K562 (cell line): ENCODE measurements at regions of chr1 and their contacts with region 1.

Region 1: GRCh38 chr1:204128964-204129896 is 22.6 kb downstream of the ETNK2 start:
- DNase-seq: peak; percentile 73 to 96 (median 94)
- ATAC-seq: peak; percentile 97
- H3K4me3 ChIP-seq: no peak overlapping the region
- H3K27ac ChIP-seq: no peak overlapping the region
- H3K4me1 ChIP-seq: peaks cover 0 to 15% of the 10 kb centered on the region in 2 experiments; a peak in 2 of 5 replicates
- H3K27me3 ChIP-seq: peaks cover 16 to 38% of the 10 kb centered on the region in 2 experiments
- CTCF ChIP-seq: peak; percentile 78 to 92 (median 88)
- EP300 ChIP-seq: no peak
- POLR2A ChIP-seq: no peak
- RAD21 ChIP-seq: peak; percentile 88 to 90

Region 2: DNA sequence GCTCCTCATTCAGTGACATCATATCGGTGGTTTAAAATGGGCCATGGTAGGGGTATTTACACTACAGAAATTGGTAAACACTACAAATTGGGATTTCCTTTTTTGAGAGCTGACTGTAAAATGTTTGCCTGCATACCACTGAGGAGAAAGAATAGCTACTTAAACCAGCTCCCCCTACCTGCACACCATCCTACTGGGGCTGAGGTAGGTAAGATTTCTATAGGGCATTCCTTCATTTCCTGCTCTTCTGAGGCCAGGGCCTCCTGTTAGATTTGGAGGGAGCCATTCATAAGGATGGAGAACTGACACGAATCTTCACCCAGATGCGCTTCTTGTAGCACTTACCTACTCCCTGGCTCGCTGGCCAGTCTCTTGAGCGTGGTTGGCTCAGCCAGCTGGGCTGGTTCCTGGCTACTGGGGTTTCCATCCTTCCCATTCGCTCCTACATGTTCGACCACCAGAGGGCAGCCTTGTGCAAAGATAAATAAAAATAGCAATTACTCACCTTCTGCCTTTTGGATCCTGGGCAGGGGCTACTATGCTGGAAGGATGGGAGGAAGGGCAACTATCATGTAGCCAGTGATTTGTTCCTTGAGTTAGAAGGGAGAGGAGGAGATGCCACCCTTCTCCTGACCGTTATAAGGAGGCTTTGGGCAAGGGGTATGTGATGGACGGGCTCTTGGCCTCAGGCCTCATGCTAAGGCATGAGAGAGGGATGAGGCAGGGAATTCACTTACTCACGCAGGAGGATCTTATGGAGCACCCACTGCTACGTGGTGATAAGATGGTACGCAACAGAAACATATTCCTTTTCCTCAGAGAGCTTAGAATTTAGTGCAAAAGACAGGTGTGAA is 624.6 kb before region 1 on chr1:
- CTCF ChIA-PET with region 1: interaction called, 8 read pairs
- POLR2A ChIA-PET with region 1: no interaction called
- in situ Hi-C with region 1: no loop called
- intact Hi-C with region 1: loop called (anchors 5 kb)
- DNase-seq: peak; percentile 85 to 88 (median 86)
- ATAC-seq: peak; percentile 88
- H3K4me3 ChIP-seq: no peak overlapping the region
- H3K27ac ChIP-seq: no peak overlapping the region
- H3K4me1 ChIP-seq: no peaks in the 10 kb centered on the region
- H3K27me3 ChIP-seq: peaks cover 19 to 53% of the 10 kb centered on the region in 2 experiments
- CTCF ChIP-seq: peak; percentile 76 to 92 (median 85)
- EP300 ChIP-seq: no peak
- POLR2A ChIP-seq: no peak
- RAD21 ChIP-seq: peak; percentile 93 to 94

Region 3: GRCh38 chr1:203861379-203862184 is 267.6 kb before region 1 on chr1 and contains the start of gene SNRPE:
- CTCF ChIA-PET with region 1: interaction called, 29 read pairs
- POLR2A ChIA-PET with region 1: no interaction called
- in situ Hi-C with region 1: loop called (anchors 5 kb)
- intact Hi-C with region 1: loop called (anchors 1 kb)
- DNase-seq: peak; percentile 96 to 100 (median 97)
- ATAC-seq: peak; percentile 97
- H3K4me3 ChIP-seq: peak within 1 kb of the TSS; percentile 92
- H3K27ac ChIP-seq: peak within 1 kb of the TSS; percentile 95
- H3K4me1 ChIP-seq: peaks cover 4 to 10% of the 10 kb centered on the region in 2 experiments; a peak in 4 of 5 replicates
- H3K27me3 ChIP-seq: no peaks in the 10 kb centered on the region
- CTCF ChIP-seq: peak; percentile 96 to 99 (median 98)
- EP300 ChIP-seq: peak; percentile 59
- POLR2A ChIP-seq: peak; percentile 99
- RAD21 ChIP-seq: peak; percentile 98 to 99
- polyA plus RNA-seq, gene SNRPE: 1,614 to 1,893 TPM

Region 4: DNA sequence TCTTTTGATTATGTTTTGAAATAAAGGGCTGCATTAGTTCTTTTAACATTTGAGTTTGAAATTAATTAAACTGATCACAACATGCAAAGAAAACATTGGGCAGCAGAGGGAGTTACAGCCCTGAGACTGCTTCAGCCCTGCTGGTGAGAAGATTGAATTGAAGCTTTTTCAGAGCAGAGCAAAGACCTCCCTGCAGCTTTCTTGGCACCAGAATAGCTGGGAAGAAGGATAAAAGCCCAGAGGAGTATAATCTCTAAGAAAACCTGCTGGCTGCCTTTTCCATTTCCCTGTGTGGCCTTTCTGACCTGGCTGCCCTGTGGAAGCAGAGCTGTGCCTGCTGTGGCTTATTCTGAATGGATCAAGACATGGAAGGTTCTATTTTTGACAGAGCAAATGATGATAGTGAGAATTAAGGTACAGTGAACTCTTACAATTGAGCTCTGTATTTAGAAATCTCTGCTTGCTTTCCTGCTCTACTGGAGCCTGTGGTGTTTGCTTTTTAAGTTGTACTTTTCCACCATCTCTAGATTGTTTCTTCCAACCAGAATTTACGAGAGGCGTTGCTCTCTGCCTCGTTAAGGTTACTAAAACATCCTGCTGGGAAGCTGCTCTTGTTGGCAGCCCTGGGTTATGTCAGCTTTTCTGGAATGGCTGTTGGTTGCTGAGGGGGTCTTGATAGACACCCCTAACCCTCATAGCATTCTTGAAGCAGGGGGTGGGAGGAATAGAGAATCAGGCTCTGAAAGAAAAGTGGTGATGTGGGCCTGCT is 257.9 kb before region 1 on chr1:
- CTCF ChIA-PET with region 1: interaction called, 35 read pairs
- POLR2A ChIA-PET with region 1: interaction called, 6 read pairs
- in situ Hi-C with region 1: no loop called
- intact Hi-C with region 1: loop called (anchors 1 kb)
- DNase-seq: peak; percentile 56 to 71 (median 68)
- ATAC-seq: peak; percentile 91
- H3K4me3 ChIP-seq: no peak overlapping the region
- H3K27ac ChIP-seq: no peak overlapping the region
- H3K4me1 ChIP-seq: no peaks in the 10 kb centered on the region
- H3K27me3 ChIP-seq: no peaks in the 10 kb centered on the region
- CTCF ChIP-seq: peak; percentile 88 to 99 (median 99)
- EP300 ChIP-seq: no peak
- POLR2A ChIP-seq: 0 out of 2 replicates have a peak, but pooled peaks have one; percentile 37
- RAD21 ChIP-seq: peak; percentile 95 to 97

Region 5: GRCh38 chr1:204837440-204838084 is 708.3 kb after region 1 on chr1:
- CTCF ChIA-PET with region 1: no interaction called
- POLR2A ChIA-PET with region 1: no interaction called
- in situ Hi-C with region 1: no loop called
- intact Hi-C with region 1: no loop called
- DNase-seq: peak; percentile 63 to 66 (median 64)
- ATAC-seq: peak; percentile 78
- H3K4me3 ChIP-seq: no peak overlapping the region
- H3K27ac ChIP-seq: no peak overlapping the region
- H3K4me1 ChIP-seq: no peaks in the 10 kb centered on the region
- H3K27me3 ChIP-seq: peaks cover 4 to 9% of the 10 kb centered on the region in 2 experiments; a peak in 4 of 5 replicates
- CTCF ChIP-seq: no peak
- EP300 ChIP-seq: no peak
- POLR2A ChIP-seq: no peak
- RAD21 ChIP-seq: no peak